GM10248 (cell line): ENCODE measurements at regions of chr1 and their contacts with region 1.

Region 1: DNA sequence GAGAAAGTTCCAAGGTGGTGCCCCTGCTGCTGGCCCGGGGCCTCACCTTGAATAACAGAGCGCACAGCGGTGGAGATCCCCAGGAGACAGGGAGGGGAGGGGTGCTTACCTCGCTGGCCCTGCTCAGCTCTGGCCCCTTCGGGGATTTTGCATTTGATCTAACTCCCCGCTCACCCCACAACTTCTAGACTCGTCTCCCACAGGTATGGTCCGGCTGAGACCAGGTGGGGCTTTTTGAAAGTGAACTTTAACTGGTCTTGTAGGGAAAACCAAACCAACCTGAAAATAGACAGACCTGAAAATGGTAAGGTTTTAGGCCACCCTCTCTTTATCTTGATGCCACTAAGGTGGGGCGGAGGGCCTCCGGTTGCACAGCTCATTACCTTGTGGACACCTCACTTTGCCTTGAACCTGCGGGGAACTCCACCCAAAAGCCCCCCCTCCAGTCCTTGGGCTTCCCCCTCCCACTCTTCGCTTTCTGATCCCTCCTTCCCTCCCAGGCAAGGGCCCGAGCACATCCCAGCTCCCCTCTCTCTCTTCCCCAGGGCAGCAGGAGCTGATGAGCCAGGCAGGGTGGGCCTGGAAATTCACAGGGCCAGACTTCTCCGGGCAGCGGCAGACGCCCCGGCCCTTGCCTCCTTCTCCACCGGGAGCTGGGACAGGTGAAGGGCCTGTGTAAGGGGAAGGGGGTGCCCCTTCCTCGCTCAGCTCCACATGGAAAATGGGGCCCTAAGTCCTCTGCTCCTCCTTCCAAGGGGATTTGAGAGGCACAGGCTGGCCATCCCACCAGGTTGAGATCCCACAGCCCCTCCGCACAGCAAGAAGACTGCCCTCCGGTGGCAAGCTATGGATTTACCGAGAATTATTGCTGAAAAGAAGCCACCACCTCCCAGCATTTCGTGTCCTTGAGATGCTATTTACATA is 16.1 kb downstream of the TNFRSF8 start:
- DNase-seq: peak; percentile 80
- CTCF ChIP-seq: peak; percentile 59

Region 2: GRCh38 chr1:11858968-11859871 is 220.0 kb before region 1 on chr1:
- CTCF ChIA-PET with region 1: no interaction called
- POLR2A ChIA-PET with region 1: no interaction called
- DNase-seq: peak; percentile 83
- CTCF ChIP-seq: no peak

Region 3: DNA sequence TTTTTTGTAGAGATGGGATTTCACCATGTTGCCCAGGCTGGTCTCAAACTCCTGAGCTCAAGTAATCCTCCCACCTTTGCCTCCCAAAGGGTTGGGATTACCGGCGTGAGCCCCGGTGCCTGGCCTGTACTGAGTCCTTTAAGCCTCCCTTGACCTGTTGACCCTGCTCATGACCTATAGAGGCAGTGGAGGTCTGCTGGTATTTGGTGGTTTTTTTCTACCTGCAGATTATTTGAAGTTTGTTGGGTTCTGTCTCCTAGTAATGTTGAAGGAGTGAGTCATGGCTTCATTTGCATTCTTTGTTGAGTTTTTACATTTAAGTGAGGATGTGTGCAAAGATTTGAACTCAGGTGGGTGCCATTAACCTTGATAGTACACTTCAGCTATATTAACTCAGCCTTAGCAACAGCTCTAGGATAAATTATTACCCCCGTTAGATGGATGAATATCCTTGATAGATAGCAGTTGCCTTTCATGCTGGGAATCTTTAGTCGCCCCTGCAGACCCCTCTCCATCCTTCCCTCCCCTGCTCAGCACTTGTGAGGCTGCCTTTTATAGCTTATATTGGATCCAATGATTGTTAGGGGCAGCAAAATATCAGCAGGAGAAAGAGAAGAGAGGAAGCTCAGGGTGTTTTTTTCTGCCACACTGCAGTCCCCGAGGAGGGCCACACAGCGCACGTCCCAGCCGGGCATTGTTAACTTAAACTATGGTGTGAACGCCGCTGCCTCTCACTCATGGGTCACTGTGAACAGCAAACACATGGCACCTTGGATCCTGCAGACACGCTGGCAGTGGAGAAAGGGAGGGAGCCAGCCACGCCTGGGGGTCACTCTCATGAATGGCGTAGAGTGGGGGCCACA is 205.6 kb before region 1 on chr1:
- CTCF ChIA-PET with region 1: no interaction called
- POLR2A ChIA-PET with region 1: no interaction called
- DNase-seq: no peak
- CTCF ChIP-seq: no peak

Region 4: GRCh38 chr1:12019858-12020509 is 59.2 kb before region 1 on chr1:
- CTCF ChIA-PET with region 1: interaction called, 10 read pairs
- POLR2A ChIA-PET with region 1: interaction called, 4 read pairs
- DNase-seq: no peak
- CTCF ChIP-seq: no peak

Region 5: DNA sequence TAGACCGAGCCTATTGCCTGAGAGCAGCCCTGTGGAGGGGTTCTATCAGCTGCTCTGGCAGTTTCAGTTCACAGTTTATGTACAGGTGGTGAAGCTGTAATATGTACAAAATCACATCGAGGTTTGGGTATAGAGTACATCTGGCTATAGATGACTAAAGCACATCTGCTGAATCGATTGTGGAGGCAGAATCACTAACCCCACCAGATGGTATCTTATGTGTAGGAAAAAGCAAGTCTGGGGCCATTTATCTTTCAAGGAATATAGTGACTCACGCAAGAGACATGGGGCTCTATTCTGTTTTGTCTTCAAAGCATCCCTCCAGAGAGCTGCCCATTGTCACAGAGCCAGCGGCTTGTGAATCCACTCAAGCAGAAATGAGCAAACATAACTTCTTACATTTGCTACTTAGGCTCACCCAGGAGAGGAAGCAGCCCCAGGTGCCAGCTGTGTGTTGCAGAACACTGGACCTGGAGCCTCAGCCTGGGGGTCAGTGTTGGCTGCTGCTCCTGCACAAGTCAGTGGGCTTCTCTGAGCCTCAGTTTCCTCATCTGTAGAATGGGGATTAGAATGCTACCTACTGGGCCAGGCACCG is 38.6 kb before region 1 on chr1:
- CTCF ChIA-PET with region 1: interaction called, 35 read pairs
- POLR2A ChIA-PET with region 1: interaction called, 8 read pairs
- DNase-seq: peak; percentile 62
- CTCF ChIP-seq: no peak

Region 6: GRCh38 chr1:12059722-12060464 is 19.3 kb before region 1 on chr1:
- CTCF ChIA-PET with region 1: interaction called, 81 read pairs
- POLR2A ChIA-PET with region 1: interaction called, 3 read pairs
- DNase-seq: no peak
- CTCF ChIP-seq: no peak

Region 7: DNA sequence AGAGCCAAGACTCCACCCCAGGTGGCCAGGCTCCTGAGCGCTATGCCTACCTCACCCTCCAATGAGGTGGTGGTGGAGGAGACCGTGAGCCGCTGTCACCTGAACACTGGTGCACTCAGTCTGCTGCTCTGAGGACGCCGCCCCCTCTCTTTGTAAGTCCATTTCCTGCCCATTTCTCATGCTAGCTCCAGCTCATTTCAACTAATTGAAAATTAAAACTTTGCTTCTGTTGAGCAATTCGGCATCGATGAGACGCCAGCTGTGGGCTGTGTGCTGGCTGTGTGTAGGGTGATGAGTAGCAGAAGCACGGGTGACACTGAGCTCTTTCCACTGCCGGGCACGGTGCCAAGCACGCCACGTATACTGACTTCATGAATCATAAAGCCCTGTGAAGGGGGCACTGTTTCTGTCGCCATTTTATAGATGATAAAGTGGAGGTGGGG is 98.8 kb after region 1 on chr1:
- CTCF ChIA-PET with region 1: no interaction called
- POLR2A ChIA-PET with region 1: no interaction called
- DNase-seq: no peak
- CTCF ChIP-seq: no peak